ENCODE measurements at regions of chr18 and their contacts with region 1.

Region 1: DNA sequence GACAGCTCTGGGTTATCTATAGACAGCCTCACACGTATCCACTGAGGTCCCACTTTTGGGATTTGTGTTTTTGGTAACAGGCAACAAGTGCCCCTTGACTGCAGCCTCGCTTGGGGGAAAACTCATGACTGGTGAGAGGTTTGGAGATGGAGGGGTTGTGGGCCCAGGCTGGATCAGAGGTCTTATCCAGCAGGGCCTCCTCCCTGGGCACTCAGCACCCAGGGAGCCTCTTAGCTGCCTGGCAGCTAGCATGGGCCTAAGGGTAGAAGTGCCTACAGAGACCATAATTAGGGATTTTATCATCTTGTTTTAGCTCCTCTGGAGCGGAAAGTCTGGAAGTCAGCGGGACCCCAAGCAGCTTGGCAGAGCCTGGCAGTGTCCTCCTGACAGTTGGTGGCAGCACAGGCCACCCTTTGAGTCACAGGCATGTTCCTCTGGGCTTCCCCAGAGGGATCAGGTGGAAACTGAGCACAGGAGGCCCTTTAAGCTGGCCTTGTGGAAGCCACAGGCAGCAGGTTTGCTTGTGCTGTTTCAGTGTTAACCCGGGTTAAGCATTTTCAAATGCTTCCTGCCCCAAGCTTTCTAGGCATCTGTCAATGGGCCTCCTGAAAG is 143.1 kb downstream of the KCTD1 start:
- DNase-seq: peak; percentile 51
- H3K4me3 ChIP-seq: no peak overlapping the region
- H3K27ac ChIP-seq: no peak overlapping the region
- H3K4me1 ChIP-seq: peaks cover 17% of the 10 kb centered on the region
- H3K27me3 ChIP-seq: no peaks in the 10 kb centered on the region
- CTCF ChIP-seq: peak; percentile 34 to 67

Region 2: GRCh38 chr18:26460449-26461091 is 55.3 kb after region 1 on chr18:
- CTCF ChIA-PET with region 1: no interaction called
- dilution Hi-C with region 1: no loop called
- in situ Hi-C with region 1: no loop called
- intact Hi-C with region 1: loop called (anchors 1 kb)
- DNase-seq: peak; percentile 92
- H3K4me3 ChIP-seq: no peak overlapping the region
- H3K27ac ChIP-seq: peak overlapping the region; percentile 89
- H3K4me1 ChIP-seq: peaks cover 36% of the 10 kb centered on the region
- H3K27me3 ChIP-seq: no peaks in the 10 kb centered on the region
- CTCF ChIP-seq: no peak

Region 3: GRCh38 chr18:26648509-26649192 is 243.4 kb after region 1 on chr18:
- CTCF ChIA-PET with region 1: no interaction called
- dilution Hi-C with region 1: no loop called
- in situ Hi-C with region 1: loop called in 1 of 2 experiments (anchors 5 kb)
- intact Hi-C with region 1: loop called (anchors 1 kb)
- DNase-seq: no peak
- H3K4me3 ChIP-seq: no peak overlapping the region
- H3K27ac ChIP-seq: no peak overlapping the region
- H3K4me1 ChIP-seq: no peaks in the 10 kb centered on the region
- H3K27me3 ChIP-seq: no peaks in the 10 kb centered on the region
- CTCF ChIP-seq: no peak

Region 4: GRCh38 chr18:26771524-26771923 is 366.2 kb after region 1 on chr18:
- CTCF ChIA-PET with region 1: no interaction called
- dilution Hi-C with region 1: no loop called
- in situ Hi-C with region 1: no loop called
- intact Hi-C with region 1: loop called (anchors 1 kb)
- DNase-seq: no peak
- H3K4me3 ChIP-seq: no peak overlapping the region
- H3K27ac ChIP-seq: no peak overlapping the region
- H3K4me1 ChIP-seq: no peaks in the 10 kb centered on the region
- H3K27me3 ChIP-seq: peaks cover 5% of the 10 kb centered on the region
- CTCF ChIP-seq: peak; percentile 43 to 72

Measured in mammary epithelial cell (primary cell).